ENCODE measurements at regions of chrX and their contacts with region 1.

Region 1: DNA sequence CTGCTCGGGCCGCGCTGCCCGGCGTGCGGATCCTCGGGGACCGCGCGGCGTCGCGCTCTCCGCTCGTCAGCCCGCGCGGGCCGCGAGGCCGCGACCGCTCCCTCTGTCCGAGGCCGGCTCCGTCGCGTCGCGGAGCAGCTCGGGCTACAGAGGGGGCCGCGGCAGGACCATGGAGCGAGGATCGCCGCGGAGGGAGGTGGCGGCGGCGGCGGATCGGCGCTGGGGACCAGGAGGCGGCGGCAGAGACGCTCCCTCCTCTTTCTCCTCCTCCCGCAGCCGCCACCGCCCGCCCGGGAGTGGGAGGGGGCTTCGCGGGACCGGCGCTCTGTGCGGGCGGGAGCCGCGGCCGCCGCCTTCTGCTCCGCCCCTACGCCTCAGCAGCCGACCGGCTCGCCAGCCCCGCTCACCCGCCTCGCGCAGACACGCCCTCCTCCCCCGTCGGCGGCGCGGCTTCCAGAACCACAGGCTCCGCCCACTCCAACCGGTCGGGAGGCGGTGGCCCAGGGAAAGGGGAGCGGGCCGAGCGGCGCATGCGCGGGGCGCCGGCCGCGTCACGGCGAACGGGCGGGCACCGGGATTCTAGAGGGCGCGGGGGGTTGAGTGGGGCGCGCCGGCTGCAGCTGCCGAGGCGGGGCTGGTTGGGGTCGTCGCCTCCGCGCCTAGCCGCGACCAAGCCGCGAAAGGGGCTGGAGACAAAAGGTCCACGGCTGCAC is at the start of gene CASK:
- DNase-seq: peak; percentile 95
- H3K4me3 ChIP-seq: peak within 1 kb of the TSS; percentile 63 to 77 (median 67)
- H3K27ac ChIP-seq: peak within 1 kb of the TSS; percentile 82 to 90 (median 86)
- H3K4me1 ChIP-seq: peaks cover 0 to 16% (median 3%) of the 10 kb centered on the region in 4 donors
- H3K27me3 ChIP-seq: no peaks in the 10 kb centered on the region
- CTCF ChIP-seq: no peak
- EP300 ChIP-seq: no peak
- POLR2A ChIP-seq: peak; percentile 56
- total RNA-seq, gene CASK: 21.3 to 28.7 (median 24.0) TPM

Region 2: DNA sequence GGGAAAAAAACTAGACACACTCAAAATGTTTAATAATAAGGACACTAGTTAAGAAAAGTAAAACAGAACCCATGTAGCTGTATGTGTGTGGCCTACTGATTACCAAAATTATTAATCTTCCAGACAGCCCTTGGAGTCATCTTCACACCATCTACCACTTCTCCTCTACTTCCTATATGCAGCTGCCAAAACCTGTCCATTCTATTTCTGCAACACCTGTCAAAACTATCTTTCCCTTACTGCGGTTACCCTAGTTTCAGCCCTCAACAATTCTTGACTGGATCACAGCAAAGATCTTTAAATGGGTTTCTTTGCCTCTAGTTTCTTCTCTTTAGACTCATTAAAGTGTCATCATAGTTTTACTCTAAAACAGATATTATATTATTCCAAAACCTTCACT is 126.8 kb before region 1 on chrX:
- intact Hi-C with region 1: loop called (anchors 10 kb)
- DNase-seq: no peak
- H3K4me3 ChIP-seq: no peak overlapping the region
- H3K27ac ChIP-seq: no peak overlapping the region
- H3K4me1 ChIP-seq: peaks cover 0 to 9% (median 3%) of the 10 kb centered on the region in 4 donors
- H3K27me3 ChIP-seq: peaks cover 0 to 6% (median 0%) of the 10 kb centered on the region in 4 donors
- CTCF ChIP-seq: no peak
- EP300 ChIP-seq: no peak
- POLR2A ChIP-seq: no peak

Measured in esophagus muscularis mucosa (tissue), 4 donors.